Left ventricle myocardium inferior (tissue), 1 donor: ENCODE measurements at regions of chr5 and their contacts with region 1.

Region 1: DNA sequence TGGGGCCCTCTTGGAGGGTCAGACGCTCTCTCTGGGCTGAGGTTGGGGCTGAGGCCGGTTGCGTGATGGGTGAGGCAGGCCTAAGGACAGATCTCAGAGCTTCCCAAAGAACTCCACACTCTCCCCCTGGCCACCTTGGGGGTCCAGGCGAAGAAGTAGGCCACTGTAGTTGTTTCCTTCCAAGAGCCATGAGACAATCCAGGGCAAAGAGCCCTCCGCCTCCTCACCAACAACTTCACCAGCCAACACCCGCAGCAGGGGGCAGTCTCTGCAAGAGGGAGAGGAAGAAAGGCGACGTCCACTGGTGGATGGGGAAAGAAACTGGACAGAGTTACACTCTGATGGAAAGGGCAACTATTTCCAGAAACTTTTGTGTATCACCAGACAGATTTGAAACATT is 10.7 kb downstream of the SLC35A4 start:
- DNase-seq: peak; percentile 49
- H3K4me3 ChIP-seq: no peak overlapping the region
- H3K27ac ChIP-seq: no peak overlapping the region
- H3K4me1 ChIP-seq: peaks cover 27% of the 10 kb centered on the region
- H3K27me3 ChIP-seq: no peaks in the 10 kb centered on the region
- CTCF ChIP-seq: peak; percentile 45

Region 2: DNA sequence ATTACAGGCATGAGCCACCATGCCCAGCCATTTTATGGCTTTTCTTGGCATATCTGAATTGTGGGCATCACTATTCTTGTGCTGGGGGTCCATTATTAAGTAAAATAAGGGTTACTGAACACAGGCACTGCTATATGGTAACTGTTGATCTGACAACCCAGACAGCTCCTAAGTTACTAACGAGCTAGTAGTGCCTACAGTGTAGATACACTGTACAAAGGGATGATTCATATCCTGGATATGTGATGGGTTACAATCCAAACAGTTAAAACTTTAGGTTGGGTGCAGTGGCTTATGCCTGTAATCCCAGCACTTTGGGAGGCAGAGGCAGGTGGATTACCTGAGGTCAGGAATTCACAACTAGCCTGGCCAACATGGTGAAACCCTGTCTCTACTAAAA is 53.4 kb after region 1 on chr5:
- intact Hi-C with region 1: loop called (anchors 10 kb)
- DNase-seq: no peak
- H3K4me3 ChIP-seq: no peak overlapping the region
- H3K27ac ChIP-seq: no peak overlapping the region
- H3K4me1 ChIP-seq: peaks cover 21% of the 10 kb centered on the region
- H3K27me3 ChIP-seq: no peaks in the 10 kb centered on the region
- CTCF ChIP-seq: no peak